ENCODE measurements at regions of chr14 and their contacts with region 1.

Region 1: DNA sequence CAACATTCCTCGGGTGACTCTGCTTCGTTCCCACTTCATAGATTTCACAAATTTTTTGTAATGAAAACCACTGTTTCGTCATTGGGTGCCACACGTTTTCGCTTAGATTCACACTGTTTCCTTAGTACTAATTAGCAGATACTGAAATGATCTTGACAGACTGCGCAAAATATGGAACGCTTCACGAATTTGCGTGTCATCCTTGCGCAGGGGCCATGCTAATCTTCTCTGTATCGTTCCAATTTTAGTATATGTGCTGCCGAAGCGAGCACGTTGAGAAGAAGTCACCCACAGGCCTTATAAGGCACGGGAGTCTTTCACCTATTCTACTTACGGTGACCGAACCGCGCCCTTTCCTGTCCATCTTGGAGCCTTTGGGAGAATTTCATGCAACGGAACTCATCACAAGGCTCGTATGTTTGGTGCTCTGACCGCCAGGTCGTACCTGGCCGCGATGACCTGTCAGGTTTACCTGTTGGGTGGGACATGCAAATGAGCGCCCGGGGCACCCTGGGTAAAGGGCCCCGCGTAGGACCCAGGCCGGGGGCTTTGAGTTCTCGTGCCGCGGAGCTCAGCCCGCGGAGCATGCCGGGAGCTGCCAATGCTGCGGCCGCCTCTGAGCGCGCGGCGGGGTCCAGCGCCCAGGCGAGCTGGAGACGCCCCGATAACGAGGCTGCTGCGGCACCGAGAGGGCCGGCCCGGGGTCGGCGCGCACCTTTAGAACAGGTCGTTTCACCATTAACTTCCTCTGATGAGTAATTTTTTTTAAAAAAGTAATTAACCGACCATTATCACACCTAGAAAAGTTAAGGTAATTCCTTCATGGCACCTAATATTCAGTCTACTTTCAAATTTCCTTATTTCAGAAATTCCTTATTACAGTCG is at the start of gene RNU6-8:
- DNase-seq: peak; percentile 80
- H3K4me3 Mint-ChIP-seq: peak within 1 kb of the TSS; percentile 88
- H3K27ac Mint-ChIP-seq: peak within 1 kb of the TSS; percentile 97
- H3K4me1 Mint-ChIP-seq: peaks cover 39% of the 10 kb centered on the region
- H3K27me3 Mint-ChIP-seq: peaks cover 22% of the 10 kb centered on the region
- total RNA-seq, gene RNU6-8: not detected in 2 replicates

Region 2: GRCh38 chr14:31388687-31389413 is 814.4 kb before region 1 on chr14:
- intact Hi-C with region 1: loop called (anchors 10 kb)
- DNase-seq: no peak
- H3K4me3 Mint-ChIP-seq: no peak overlapping the region
- H3K27ac Mint-ChIP-seq: peak overlapping the region; percentile 73
- H3K4me1 Mint-ChIP-seq: peaks cover 30% of the 10 kb centered on the region
- H3K27me3 Mint-ChIP-seq: no peaks in the 10 kb centered on the region

Region 3: GRCh38 chr14:31561155-31561846 is 641.9 kb before region 1 on chr14 and contains the start of gene NUBPL:
- intact Hi-C with region 1: loop called (anchors 10 kb)
- DNase-seq: peak; percentile 96
- H3K4me3 Mint-ChIP-seq: peak within 1 kb of the TSS; percentile 90
- H3K27ac Mint-ChIP-seq: peak within 1 kb of the TSS; percentile 95
- H3K4me1 Mint-ChIP-seq: peaks cover 21% of the 10 kb centered on the region
- H3K27me3 Mint-ChIP-seq: peaks cover 8% of the 10 kb centered on the region
- total RNA-seq, gene NUBPL: 8.7 and 9.5 TPM in 2 replicates

Region 4: GRCh38 chr14:32038876-32039275 is 164.4 kb before region 1 on chr14:
- intact Hi-C with region 1: no loop called
- DNase-seq: no peak
- H3K4me3 Mint-ChIP-seq: no peak overlapping the region
- H3K27ac Mint-ChIP-seq: no peak overlapping the region
- H3K4me1 Mint-ChIP-seq: peaks cover 5% of the 10 kb centered on the region
- H3K27me3 Mint-ChIP-seq: peaks cover 4% of the 10 kb centered on the region

Region 5: DNA sequence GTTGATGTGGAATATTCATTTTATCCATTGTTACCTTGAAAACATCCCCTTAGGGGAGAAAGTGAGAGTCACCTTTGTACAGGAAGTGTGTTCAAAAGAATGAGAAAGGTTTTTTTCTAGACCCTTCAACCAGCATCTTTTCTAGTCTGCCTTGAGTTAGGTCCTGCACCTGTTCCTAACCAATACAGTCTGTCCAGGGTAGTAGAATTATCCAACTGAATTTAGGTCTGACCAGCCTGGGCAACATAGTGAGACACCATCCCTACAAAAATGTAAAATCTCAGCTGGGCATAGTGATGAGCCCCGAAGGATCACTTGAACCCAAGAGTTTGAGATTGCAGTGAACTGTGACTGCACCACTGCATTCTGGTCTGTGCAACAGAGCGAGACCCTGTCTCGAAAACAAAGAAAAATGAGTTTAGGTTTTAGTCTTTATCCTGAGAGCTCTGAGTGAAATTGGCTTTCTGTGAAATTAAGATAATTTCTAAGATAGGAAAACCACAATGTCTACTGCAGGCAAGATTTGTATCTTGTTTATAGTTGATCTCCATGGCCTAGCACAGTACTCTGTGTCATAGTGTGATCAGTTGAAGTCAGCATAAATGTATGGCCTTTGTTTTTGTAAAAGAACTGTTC is 101.0 kb before region 1 on chr14:
- intact Hi-C with region 1: loop called (anchors 1 kb)
- DNase-seq: peak; percentile 24
- H3K4me3 Mint-ChIP-seq: peak overlapping the region; percentile 22
- H3K27ac Mint-ChIP-seq: peak overlapping the region; percentile 18
- H3K4me1 Mint-ChIP-seq: peaks cover 37% of the 10 kb centered on the region
- H3K27me3 Mint-ChIP-seq: no peaks in the 10 kb centered on the region

Region 6: DNA sequence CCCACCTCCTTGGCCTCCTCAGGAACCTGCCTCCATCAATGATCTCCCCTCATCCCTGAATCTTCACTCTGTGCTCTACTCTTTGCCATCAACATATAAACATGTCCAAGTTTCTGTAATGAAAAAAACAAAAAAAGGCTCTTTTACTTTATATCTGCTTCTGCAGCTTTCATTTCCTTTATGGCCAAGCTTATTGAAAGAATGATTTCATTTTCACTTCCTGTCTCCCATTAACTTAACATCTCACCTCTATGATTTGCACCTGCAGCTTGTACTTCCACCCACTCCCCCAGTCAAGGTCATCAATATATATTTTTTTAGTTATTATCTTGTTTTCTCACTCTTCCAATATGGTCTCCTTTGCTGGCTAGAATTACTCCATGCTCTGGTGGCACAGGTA is 17.0 kb before region 1 on chr14:
- intact Hi-C with region 1: no loop called
- DNase-seq: no peak
- H3K4me3 Mint-ChIP-seq: no peak overlapping the region
- H3K27ac Mint-ChIP-seq: no peak overlapping the region
- H3K4me1 Mint-ChIP-seq: peaks cover 12% of the 10 kb centered on the region
- H3K27me3 Mint-ChIP-seq: peaks cover 4% of the 10 kb centered on the region